ENCODE measurements at regions of chr17 and their contacts with region 1.

Region 1: DNA sequence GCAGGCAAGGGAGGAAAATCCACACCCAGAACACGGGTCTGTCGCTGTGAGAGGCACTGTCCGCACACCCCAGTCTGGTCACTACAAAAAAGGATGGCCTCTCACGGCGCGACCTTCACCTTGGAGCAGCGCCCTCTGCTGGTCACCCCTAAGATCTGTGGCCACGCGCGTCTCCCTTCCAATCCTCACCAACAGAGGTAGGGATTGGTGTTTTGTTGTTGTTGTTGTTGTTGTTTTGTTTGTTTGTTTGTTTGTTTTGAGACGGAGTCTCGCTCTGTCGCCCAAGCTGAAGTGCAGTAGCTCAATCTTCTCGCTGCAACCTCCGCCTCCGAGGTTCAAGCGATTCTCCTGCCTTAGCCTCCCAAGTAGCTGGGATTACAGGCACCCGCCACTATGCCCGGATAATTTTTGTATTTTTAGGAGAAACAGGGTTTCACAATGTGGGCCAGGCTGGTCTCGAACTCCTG is 15.0 kb upstream of the C17orf58 start:
- DNase-seq: peak; percentile 90
- H3K4me3 Mint-ChIP-seq: peak overlapping the region; percentile 74
- H3K27ac Mint-ChIP-seq: no peak overlapping the region
- H3K4me1 Mint-ChIP-seq: peaks cover 5% of the 10 kb centered on the region
- H3K27me3 Mint-ChIP-seq: peaks cover 13% of the 10 kb centered on the region

Region 2: GRCh38 chr17:67959288-67959900 is 51.8 kb before region 1 on chr17:
- intact Hi-C with region 1: loop called (anchors 1 kb)
- DNase-seq: no peak
- H3K4me3 Mint-ChIP-seq: no peak overlapping the region
- H3K27ac Mint-ChIP-seq: peak overlapping the region; percentile 30
- H3K4me1 Mint-ChIP-seq: peaks cover 7% of the 10 kb centered on the region
- H3K27me3 Mint-ChIP-seq: no peaks in the 10 kb centered on the region

Region 3: DNA sequence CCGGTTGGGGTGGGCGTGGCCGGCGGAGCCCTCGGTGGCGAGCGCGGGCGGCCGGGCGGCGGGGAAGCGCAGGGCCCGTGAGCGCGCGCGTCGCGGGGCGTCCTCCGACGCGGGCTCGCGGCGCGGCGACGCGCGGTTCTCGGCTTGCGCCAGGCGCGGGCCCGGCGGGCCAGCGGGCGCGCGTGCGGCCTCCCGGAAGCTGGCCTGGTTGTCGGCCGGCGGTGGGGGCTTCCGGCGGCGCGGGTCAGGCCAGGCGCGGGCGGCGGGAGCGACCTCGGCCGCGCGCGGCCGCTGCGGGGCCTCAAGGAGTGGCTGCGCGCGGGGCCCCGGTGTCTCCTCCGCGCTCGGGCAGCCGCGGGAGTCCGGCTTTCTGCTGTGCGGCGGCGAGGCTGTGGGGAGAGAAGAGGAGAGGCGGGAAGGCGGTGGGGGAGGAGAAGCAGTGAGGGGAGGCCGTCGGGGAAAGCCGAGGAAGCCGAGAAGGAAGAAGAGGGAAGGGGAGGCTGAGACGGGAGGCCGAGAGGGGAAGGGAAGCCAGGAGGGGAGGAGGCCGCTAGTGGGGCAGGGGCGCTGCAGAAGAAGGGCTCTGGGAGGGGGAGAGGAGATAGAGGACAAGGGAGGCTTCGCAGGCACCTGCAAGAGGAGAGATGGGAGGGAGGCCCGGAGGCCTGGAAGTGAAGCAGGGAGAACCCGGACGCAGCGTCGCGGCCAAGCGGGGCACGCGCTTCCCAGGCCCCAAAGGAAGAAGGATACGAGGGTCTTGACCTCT is 17.5 kb before region 1 on chr17:
- intact Hi-C with region 1: loop called (anchors 2 kb)
- DNase-seq: peak; percentile 92
- H3K4me3 Mint-ChIP-seq: peak overlapping the region; percentile 82
- H3K27ac Mint-ChIP-seq: peak overlapping the region; percentile 89
- H3K4me1 Mint-ChIP-seq: peaks cover 35% of the 10 kb centered on the region
- H3K27me3 Mint-ChIP-seq: peaks cover 28% of the 10 kb centered on the region

Measured in activated CD4-positive, alpha-beta T cell treated with anti-CD3 and anti-CD28 coated beads, Interleukin-2, amount 10 ng/mL, durations not matched to agents 24 days and 14 days (primary cell).